GM10248 (cell line): ENCODE measurements at regions of chr20 and their contacts with region 1.

Region 1: DNA sequence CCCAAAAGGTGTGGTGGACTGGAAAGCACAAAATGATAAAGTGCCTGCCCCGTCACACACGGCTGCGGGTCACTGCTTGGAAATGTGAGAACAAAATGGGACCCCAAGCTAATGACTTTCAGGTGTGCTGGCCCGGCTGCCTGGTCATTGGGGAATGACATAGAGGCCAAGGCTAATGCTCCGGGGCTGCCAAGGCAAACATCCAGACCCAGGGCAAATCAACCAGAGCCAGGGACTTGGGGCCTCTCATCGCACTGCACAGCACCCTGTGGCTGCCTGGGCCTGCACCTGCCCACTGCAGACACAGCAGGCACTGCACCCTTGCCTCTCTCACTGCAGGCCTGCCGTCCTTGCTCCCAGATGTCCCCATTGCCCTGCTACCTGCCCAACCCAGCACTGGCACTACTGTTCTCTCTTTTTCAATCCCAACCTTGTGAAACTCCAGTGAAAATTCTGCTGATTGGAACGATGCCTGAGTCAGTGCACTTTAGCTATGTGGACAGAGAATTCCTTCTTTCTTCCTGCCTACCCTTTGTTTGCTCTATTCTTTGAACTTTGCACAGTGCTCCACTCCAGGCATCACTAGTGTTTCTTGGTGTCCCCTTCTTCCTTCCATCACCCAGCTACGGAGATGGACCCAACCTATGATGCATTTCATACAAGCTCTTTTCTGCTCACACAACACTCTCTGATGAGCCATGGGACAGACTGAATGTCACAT is 849.5 kb downstream of the MAFB start:
- DNase-seq: no peak
- CTCF ChIP-seq: no peak

Region 2: GRCh38 chr20:39766333-39766732 is 73.2 kb before region 1 on chr20:
- CTCF ChIA-PET with region 1: no interaction called
- POLR2A ChIA-PET with region 1: no interaction called
- DNase-seq: no peak
- CTCF ChIP-seq: no peak

Region 3: GRCh38 chr20:39829256-39829655 is 10.3 kb before region 1 on chr20:
- CTCF ChIA-PET with region 1: interaction called, 12 read pairs
- POLR2A ChIA-PET with region 1: no interaction called
- DNase-seq: no peak
- CTCF ChIP-seq: peak; percentile 24